Mammary epithelial cell (primary cell): ENCODE measurements at regions of chr9 and their contacts with region 1.

Region 1: GRCh38 chr9:75964427-75964826 is 74.0 kb downstream of the PCSK5 start:
- DNase-seq: peak; percentile 89
- H3K4me3 ChIP-seq: no peak overlapping the region
- H3K27ac ChIP-seq: peak overlapping the region; percentile 79
- H3K4me1 ChIP-seq: peaks cover 8% of the 10 kb centered on the region
- H3K27me3 ChIP-seq: no peaks in the 10 kb centered on the region
- CTCF ChIP-seq: no peak

Region 2: GRCh38 chr9:75797085-75797580 is 167.3 kb before region 1 on chr9:
- CTCF ChIA-PET with region 1: no interaction called
- dilution Hi-C with region 1: no loop called
- in situ Hi-C with region 1: no loop called
- intact Hi-C with region 1: no loop called
- DNase-seq: peak; percentile 36
- H3K4me3 ChIP-seq: no peak overlapping the region
- H3K27ac ChIP-seq: no peak overlapping the region
- H3K4me1 ChIP-seq: no peaks in the 10 kb centered on the region
- H3K27me3 ChIP-seq: no peaks in the 10 kb centered on the region
- CTCF ChIP-seq: no peak

Region 3: DNA sequence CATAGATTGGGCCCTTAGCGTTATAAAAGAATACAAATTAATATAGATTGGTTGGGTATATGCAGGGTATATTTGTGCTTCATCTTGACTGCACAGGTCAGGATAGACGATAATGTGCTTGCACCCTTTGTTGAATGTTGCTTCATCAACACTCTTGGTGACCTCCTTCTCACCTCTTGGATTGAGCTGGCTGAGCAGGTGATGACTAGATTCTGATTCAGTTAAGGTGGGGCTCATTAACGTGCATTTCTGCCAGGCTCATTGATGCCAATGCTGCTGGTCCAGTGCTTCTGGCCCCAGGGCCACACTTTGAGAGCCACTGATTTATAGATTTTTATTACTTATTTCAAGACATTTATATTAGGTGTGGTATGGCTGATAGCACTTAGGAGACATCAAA is 46.3 kb before region 1 on chr9:
- CTCF ChIA-PET with region 1: no interaction called
- dilution Hi-C with region 1: no loop called
- in situ Hi-C with region 1: no loop called
- intact Hi-C with region 1: loop called (anchors 2 kb)
- DNase-seq: peak; percentile 86
- H3K4me3 ChIP-seq: no peak overlapping the region
- H3K27ac ChIP-seq: peak overlapping the region; percentile 55
- H3K4me1 ChIP-seq: peaks cover 8% of the 10 kb centered on the region
- H3K27me3 ChIP-seq: no peaks in the 10 kb centered on the region
- CTCF ChIP-seq: no peak